ENCODE measurements at regions of chr4 and their contacts with region 1.

Region 1: DNA sequence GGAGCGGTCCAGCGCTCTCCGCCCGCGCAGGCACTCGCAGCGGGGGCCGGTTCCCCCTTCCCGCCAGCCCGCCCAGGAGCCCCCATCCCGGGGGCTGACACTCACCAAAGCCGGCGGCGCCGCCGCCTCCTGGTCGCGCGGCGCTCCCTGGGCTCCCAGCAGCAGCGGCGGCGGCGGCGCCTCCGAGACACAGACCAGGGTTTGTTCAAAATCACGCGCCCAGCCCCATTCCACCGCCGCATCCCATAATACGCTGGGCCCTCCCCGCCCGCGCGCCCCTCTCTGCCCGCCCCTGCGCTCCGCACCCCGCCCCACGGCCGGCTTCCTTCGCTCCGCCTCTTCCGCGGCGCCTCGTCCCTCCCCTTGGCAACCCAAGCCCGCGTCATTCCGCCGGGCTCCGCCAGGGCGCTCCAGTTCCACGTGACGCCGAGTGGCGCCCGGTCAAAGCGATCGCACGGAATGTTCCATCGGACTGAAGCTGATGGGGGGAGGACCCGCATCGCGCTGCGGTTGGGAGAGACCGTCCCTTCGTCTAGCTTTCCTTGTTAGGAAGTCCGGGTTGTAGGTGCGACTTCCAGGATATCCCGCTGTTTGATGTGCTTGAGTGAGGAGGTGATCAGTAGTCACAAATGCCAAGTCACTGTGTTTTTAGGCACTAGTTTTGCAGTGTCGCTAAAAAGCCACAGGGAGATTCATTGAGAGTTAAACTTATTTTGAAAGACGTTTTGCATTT is 2.2 kb upstream of the LIN54 start:
- DNase-seq: peak; percentile 94 to 98 (median 96)
- ATAC-seq: peak; percentile 88
- H3K4me3 ChIP-seq: peak overlapping the region; percentile 54 to 69
- H3K4me3 Mint-ChIP-seq: peak overlapping the region; percentile 90
- H3K27ac ChIP-seq: peak overlapping the region; percentile 56 to 95
- H3K27ac Mint-ChIP-seq: peak overlapping the region; percentile 91
- H3K4me1 ChIP-seq: peaks cover 31% of the 10 kb centered on the region
- H3K4me1 Mint-ChIP-seq: peaks cover 40% of the 10 kb centered on the region
- H3K27me3 ChIP-seq: no peaks in the 10 kb centered on the region
- H3K27me3 Mint-ChIP-seq: no peaks in the 10 kb centered on the region
- CTCF ChIP-seq: peak; percentile 65

Region 2: DNA sequence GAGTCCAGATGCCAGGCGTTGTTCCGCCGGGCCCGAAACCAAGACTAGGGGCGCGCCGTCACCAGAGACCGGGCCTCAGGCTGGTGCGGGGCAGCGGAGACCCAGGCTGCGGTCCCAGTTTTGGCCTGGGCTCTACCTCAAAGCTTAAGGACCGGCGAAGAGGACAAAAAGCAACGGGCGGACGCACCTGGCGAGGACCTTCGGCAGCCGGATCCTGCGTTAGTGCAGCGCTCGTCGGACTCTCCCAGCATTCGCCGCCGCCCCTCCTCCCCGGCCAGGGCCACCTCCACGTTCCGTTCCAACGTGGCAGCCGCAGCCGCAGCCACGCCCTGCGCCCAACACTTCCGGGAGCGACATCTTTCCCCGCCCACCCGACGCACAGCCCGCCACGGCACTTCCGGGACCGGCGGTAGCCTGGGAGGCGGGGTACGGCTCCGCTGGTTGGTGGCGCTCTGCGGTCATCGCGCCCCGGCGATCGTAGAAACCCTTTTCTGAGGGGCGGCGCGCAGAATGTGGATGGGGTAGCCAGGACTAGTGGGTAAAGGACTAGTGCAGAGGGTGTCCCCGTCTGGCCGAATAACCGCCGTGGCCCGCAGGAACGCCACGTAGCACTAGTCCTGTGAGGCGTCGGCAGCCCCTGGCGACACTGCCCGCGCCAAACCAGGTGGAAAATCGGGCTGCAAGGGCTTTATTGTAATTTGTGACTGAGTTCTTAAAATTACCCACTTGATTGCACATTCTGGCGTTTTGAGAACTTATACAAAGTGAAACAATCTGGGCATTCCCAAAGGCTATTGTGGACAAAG is 121.7 kb before region 1 on chr4 and contains the start of gene SEC31A:
- CTCF ChIA-PET with region 1: no interaction called
- POLR2A ChIA-PET with region 1: interaction called, 4 read pairs
- intact Hi-C with region 1: loop called in 1 of 2 experiments (anchors 2 kb)
- DNase-seq: peak; percentile 93 to 99 (median 97)
- ATAC-seq: peak; percentile 93
- H3K4me3 ChIP-seq: peak within 1 kb of the TSS; percentile 87 to 88
- H3K4me3 Mint-ChIP-seq: peak within 1 kb of the TSS; percentile 89
- H3K27ac ChIP-seq: peak within 1 kb of the TSS; percentile 96
- H3K27ac Mint-ChIP-seq: peak within 1 kb of the TSS; percentile 98
- H3K4me1 ChIP-seq: peaks cover 22% of the 10 kb centered on the region
- H3K4me1 Mint-ChIP-seq: peaks cover 45% of the 10 kb centered on the region
- H3K27me3 ChIP-seq: no peaks in the 10 kb centered on the region
- H3K27me3 Mint-ChIP-seq: no peaks in the 10 kb centered on the region
- CTCF ChIP-seq: no peak
- total RNA-seq, gene SEC31A: 115 to 117 TPM

Measured in CD8-positive, alpha-beta T cell (primary cell).